ENCODE measurements at regions of chr5 and their contacts with region 1.

Region 1: GRCh38 chr5:146426853-146427618 is 20.1 kb upstream of the TCERG1 start:
- DNase-seq: no peak
- H3K4me3 Mint-ChIP-seq: no peak overlapping the region
- H3K27ac Mint-ChIP-seq: no peak overlapping the region
- H3K4me1 Mint-ChIP-seq: peaks cover 6% of the 10 kb centered on the region
- H3K27me3 Mint-ChIP-seq: peaks cover 22% of the 10 kb centered on the region

Region 2: GRCh38 chr5:146291421-146292074 is 135.5 kb before region 1 on chr5:
- intact Hi-C with region 1: loop called (anchors 1 kb)
- DNase-seq: no peak
- H3K4me3 Mint-ChIP-seq: no peak overlapping the region
- H3K27ac Mint-ChIP-seq: no peak overlapping the region
- H3K4me1 Mint-ChIP-seq: no peaks in the 10 kb centered on the region
- H3K27me3 Mint-ChIP-seq: no peaks in the 10 kb centered on the region